GM12878 (cell line): ENCODE measurements at regions of chr1 and their contacts with region 1.

Region 1: DNA sequence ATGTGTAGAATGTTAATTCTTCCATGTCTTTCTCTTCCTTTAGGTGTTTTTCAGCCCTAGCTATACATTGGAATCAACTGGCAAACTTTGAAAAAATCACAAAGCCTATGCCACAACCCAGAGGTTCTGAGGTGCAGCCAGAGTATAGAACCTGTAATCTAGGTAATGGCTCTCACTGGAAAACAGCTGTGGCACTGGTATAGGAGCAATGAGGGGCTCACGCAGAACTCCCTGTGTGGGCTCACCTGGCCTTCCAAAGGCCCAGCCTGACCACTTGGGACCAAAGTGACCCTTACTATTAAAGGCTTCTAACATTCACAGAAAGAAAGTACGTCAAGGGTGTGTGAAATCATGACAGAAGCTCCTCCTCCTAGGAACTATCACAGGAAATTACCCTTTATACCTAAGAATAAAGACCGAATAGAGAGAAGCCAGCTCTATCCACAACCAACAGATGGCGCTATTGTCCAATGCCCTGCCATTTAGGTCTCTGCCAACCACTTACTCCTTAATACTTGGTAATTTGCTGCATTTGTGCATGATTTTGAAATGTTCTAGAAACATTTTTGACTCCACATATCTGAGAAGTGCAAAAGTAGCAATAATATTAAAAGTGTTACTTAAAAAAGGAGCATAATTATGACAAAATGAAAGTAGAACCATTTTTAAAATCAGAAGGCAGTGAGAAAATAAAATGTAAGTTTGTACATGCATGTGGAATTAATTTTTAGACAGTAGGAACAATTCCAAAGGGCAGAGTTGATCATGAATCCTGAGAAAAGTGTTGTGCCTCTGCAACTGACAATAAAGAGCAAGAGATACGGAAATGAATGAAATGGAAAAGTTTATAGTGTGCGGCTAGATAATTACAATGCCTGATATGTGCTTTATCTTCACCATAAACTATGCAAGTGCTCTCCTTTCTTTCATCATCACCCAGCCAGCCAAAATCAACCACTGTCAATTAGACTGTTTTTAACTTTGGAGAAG is 93.1 kb upstream of the HAO2 start:
- DNase-seq: no peak
- ATAC-seq: peak; percentile 97
- H3K4me3 ChIP-seq: no peak overlapping the region
- H3K27ac ChIP-seq: no peak overlapping the region
- H3K4me1 ChIP-seq: no peaks in the 10 kb centered on the region
- H3K27me3 ChIP-seq: no peaks in the 10 kb centered on the region
- CTCF ChIP-seq: peak; percentile 80 to 95 (median 92)
- EP300 ChIP-seq: no peak
- POLR2A ChIP-seq: no peak
- RAD21 ChIP-seq: peak; percentile 72

Region 2: GRCh38 chr1:119140177-119141019 is 135.0 kb before region 1 on chr1 and contains the start of gene WARS2:
- CTCF ChIA-PET with region 1: interaction called, 71 read pairs
- POLR2A ChIA-PET with region 1: interaction called, 3 read pairs
- RAD21 ChIA-PET with region 1: interaction called, 31 read pairs
- SMC1A ChIA-PET with region 1: interaction called, 30 read pairs
- in situ Hi-C with region 1: no loop called
- intact Hi-C with region 1: no loop called
- DNase-seq: peak; percentile 93
- ATAC-seq: peak; percentile 96
- H3K4me3 ChIP-seq: peak within 1 kb of the TSS; percentile 74
- H3K27ac ChIP-seq: peak within 1 kb of the TSS; percentile 99
- H3K4me1 ChIP-seq: no peaks in the 10 kb centered on the region
- H3K27me3 ChIP-seq: no peaks in the 10 kb centered on the region
- CTCF ChIP-seq: peak in 2 of 3 experiments; percentile 1 to 30; a peak in 2 of 6 replicates
- EP300 ChIP-seq: peak in 1 of 2 experiments; percentile 12; a peak in 1 of 4 replicates
- POLR2A ChIP-seq: peak; percentile 92
- RAD21 ChIP-seq: no peak
- polyA plus RNA-seq, gene WARS2: 5.5 to 5.9 TPM

Region 3: DNA sequence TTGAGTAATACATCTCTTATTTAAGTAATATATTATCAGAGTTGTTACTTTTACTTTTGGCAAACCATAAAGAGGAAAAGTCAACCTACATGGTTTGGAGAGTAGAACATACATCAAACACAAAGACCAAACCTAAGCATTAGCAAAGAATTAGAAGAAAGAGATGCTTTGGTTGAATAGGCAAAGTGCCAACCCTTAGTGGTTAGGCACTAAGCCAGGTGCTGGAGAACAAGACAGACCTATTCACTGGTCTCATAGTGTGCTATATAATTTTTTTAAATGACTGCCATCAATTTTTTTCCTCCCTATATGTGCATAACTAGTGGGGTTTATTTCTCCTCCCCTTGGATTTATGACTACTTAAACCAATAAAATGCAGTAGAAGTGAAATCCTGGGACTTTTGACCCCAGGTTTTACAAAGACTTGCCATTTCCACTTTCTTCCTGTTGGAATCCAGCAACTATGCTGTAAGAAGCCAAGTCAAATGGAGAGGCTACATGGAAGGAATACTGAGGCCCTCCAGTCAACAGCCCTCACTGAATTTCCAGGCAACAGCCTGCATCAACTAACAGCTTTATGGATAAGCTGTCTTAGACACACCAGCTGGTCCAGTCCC is 23.4 kb after region 1 on chr1:
- CTCF ChIA-PET with region 1: interaction called, 6 read pairs
- POLR2A ChIA-PET with region 1: interaction called, 3 read pairs
- RAD21 ChIA-PET with region 1: interaction called, 12 read pairs
- SMC1A ChIA-PET with region 1: interaction called, 4 read pairs
- in situ Hi-C with region 1: no loop called
- intact Hi-C with region 1: no loop called
- DNase-seq: no peak
- ATAC-seq: peak; percentile 41
- H3K4me3 ChIP-seq: no peak overlapping the region
- H3K27ac ChIP-seq: no peak overlapping the region
- H3K4me1 ChIP-seq: no peaks in the 10 kb centered on the region
- H3K27me3 ChIP-seq: peaks cover 0 to 3% of the 10 kb centered on the region in 2 experiments; a peak in 1 of 4 replicates
- CTCF ChIP-seq: no peak
- EP300 ChIP-seq: no peak
- POLR2A ChIP-seq: no peak
- RAD21 ChIP-seq: no peak

Region 4: GRCh38 chr1:119327436-119328155 is 52.2 kb after region 1 on chr1:
- CTCF ChIA-PET with region 1: interaction called, 37 read pairs
- POLR2A ChIA-PET with region 1: no interaction called
- RAD21 ChIA-PET with region 1: interaction called, 15 read pairs
- SMC1A ChIA-PET with region 1: interaction called, 6 read pairs
- in situ Hi-C with region 1: no loop called
- intact Hi-C with region 1: no loop called
- DNase-seq: no peak
- ATAC-seq: peak; percentile 24
- H3K4me3 ChIP-seq: peak overlapping the region; percentile 20; the same call in 1 of the 2 replicates
- H3K27ac ChIP-seq: no peak overlapping the region
- H3K4me1 ChIP-seq: peaks cover 24% of the 10 kb centered on the region
- H3K27me3 ChIP-seq: no peaks in the 10 kb centered on the region
- CTCF ChIP-seq: peak; percentile 39 to 60 (median 46)
- EP300 ChIP-seq: no peak
- POLR2A ChIP-seq: no peak
- RAD21 ChIP-seq: peak; percentile 20; the same call in 1 of the 2 replicates

Region 5: GRCh38 chr1:119367427-119368124 is 92.1 kb after region 1 on chr1:
- CTCF ChIA-PET with region 1: interaction called, 144 read pairs
- POLR2A ChIA-PET with region 1: no interaction called
- RAD21 ChIA-PET with region 1: interaction called, 58 read pairs
- SMC1A ChIA-PET with region 1: interaction called, 73 read pairs
- in situ Hi-C with region 1: no loop called
- intact Hi-C with region 1: loop called (anchors 1 kb)
- DNase-seq: no peak
- ATAC-seq: peak; percentile 82
- H3K4me3 ChIP-seq: no peak overlapping the region
- H3K27ac ChIP-seq: no peak overlapping the region
- H3K4me1 ChIP-seq: peaks cover 5% of the 10 kb centered on the region; the same call in 1 of the 2 replicates
- H3K27me3 ChIP-seq: no peaks in the 10 kb centered on the region
- CTCF ChIP-seq: peak; percentile 93 to 98 (median 94); a peak in 5 of 6 replicates
- EP300 ChIP-seq: no peak
- POLR2A ChIP-seq: no peak
- RAD21 ChIP-seq: peak; percentile 99

Region 6: GRCh38 chr1:119385650-119386049 is 110.2 kb after region 1 on chr1:
- CTCF ChIA-PET with region 1: no interaction called
- POLR2A ChIA-PET with region 1: no interaction called
- RAD21 ChIA-PET with region 1: no interaction called
- SMC1A ChIA-PET with region 1: no interaction called
- in situ Hi-C with region 1: no loop called
- intact Hi-C with region 1: no loop called
- DNase-seq: no peak
- ATAC-seq: no peak
- H3K4me3 ChIP-seq: no peak overlapping the region
- H3K27ac ChIP-seq: no peak overlapping the region
- H3K4me1 ChIP-seq: no peaks in the 10 kb centered on the region
- H3K27me3 ChIP-seq: no peaks in the 10 kb centered on the region
- CTCF ChIP-seq: no peak
- EP300 ChIP-seq: no peak
- POLR2A ChIP-seq: no peak
- RAD21 ChIP-seq: no peak

Region 7: DNA sequence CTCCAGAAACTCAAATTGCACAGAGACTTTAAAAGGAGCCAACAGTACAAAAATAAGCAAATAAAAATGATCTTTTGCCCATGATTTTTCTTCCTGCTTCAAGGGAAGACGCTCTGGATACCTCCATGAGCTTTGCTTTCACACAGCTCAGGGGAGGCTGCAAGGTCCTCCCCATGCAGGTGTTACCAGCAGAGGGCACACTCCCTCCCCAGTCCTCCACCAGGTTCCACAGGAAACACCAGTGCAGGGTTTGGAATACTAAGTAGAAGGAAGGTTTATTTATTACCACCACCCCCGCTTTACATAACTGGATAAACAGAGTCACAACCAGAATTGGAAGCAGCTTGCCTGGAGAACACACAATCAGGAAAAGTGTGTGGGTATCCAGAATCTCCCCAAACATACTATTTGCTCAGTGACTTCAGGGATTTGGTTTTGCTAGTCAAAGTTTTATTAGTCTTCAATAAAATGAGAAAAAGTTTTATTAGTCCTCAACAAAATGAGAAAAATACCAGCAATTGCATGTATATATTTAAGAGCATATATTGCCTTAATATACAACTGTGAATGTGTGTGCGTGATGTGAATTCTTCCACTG is 268.8 kb after region 1 on chr1:
- CTCF ChIA-PET with region 1: no interaction called
- POLR2A ChIA-PET with region 1: no interaction called
- RAD21 ChIA-PET with region 1: interaction called, 3 read pairs
- SMC1A ChIA-PET with region 1: no interaction called
- in situ Hi-C with region 1: no loop called
- intact Hi-C with region 1: loop called (anchors 5 kb)
- DNase-seq: no peak
- ATAC-seq: peak; percentile 72
- H3K4me3 ChIP-seq: no peak overlapping the region
- H3K27ac ChIP-seq: no peak overlapping the region
- H3K4me1 ChIP-seq: no peaks in the 10 kb centered on the region
- H3K27me3 ChIP-seq: peaks cover 0 to 4% of the 10 kb centered on the region in 2 experiments; a peak in 1 of 4 replicates
- CTCF ChIP-seq: peak; percentile 34 to 69 (median 63)
- EP300 ChIP-seq: no peak
- POLR2A ChIP-seq: no peak
- RAD21 ChIP-seq: no peak